ENCODE measurements at regions of chr4 and their contacts with region 1.

Region 1: DNA sequence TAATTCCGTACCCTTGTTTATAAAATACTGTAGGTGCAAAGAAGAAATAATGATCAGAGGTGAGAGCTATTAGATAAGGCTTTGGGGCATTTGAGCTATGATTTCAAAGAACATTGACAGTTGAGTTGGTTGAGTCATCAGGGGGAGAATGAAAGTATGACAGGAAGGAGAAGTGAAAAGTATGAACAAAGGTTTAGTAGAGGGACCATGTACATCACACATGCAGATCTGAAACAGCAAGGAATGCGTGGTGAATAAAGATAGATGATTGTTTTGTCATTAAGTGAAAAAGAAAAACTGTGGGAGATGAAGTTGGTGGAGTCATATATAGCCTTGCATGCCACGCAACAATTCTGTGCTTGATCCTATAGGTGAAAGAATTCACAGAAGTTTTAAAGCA is 163.1 kb downstream of the ARAP2 start:
- DNase-seq: no peak
- H3K4me3 Mint-ChIP-seq: no peak overlapping the region
- H3K27ac Mint-ChIP-seq: no peak overlapping the region
- H3K4me1 Mint-ChIP-seq: peaks cover 12% of the 10 kb centered on the region
- H3K27me3 Mint-ChIP-seq: no peaks in the 10 kb centered on the region

Region 2: DNA sequence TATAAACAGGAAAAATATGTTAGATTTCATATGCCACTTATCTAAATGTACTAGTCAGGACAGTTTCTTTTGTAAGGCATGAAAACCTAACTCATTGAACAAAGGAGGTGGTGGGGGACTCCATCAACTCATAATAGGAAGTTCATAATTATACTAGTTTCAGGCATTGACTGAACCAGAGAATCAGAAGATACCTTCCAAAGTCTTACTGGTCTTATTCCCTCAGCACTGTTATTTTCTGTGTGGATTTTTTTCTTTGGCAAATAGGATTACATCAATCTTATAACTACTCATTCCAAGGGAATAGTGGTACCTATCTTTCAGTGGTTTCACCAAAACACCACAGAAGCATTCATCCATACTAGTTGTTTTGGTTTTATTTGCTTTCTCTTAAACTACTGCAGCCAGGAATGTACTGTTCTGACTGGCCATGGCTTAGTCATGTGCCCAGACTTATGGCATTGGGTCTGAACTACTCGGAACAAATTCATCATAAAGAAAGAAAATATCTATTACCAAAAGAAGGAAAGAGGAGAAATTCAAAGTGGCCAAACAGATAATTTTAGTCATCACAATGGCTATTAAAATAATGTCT is 110.7 kb before region 1 on chr4:
- intact Hi-C with region 1: loop called (anchors 1 kb)
- DNase-seq: no peak
- H3K4me3 Mint-ChIP-seq: no peak overlapping the region
- H3K27ac Mint-ChIP-seq: no peak overlapping the region
- H3K4me1 Mint-ChIP-seq: peaks cover 7% of the 10 kb centered on the region
- H3K27me3 Mint-ChIP-seq: peaks cover 5% of the 10 kb centered on the region

Region 3: GRCh38 chr4:35975617-35976355 is 105.4 kb before region 1 on chr4:
- intact Hi-C with region 1: loop called (anchors 1 kb)
- DNase-seq: no peak
- H3K4me3 Mint-ChIP-seq: no peak overlapping the region
- H3K27ac Mint-ChIP-seq: peak overlapping the region; percentile 33
- H3K4me1 Mint-ChIP-seq: peaks cover 20% of the 10 kb centered on the region
- H3K27me3 Mint-ChIP-seq: peaks cover 5% of the 10 kb centered on the region

Region 4: GRCh38 chr4:36099527-36099926 is 18.3 kb after region 1 on chr4:
- intact Hi-C with region 1: loop called (anchors 1 kb)
- DNase-seq: peak; percentile 30
- H3K4me3 Mint-ChIP-seq: no peak overlapping the region
- H3K27ac Mint-ChIP-seq: peak overlapping the region; percentile 71
- H3K4me1 Mint-ChIP-seq: peaks cover 23% of the 10 kb centered on the region
- H3K27me3 Mint-ChIP-seq: no peaks in the 10 kb centered on the region